Activated naive CD4-positive, alpha-beta T cell treated with anti-CD3 and anti-CD28 coated beads, Interleukin-2, amount 10 ng/mL, durations not matched to agents 7 days and 5 days (primary cell): ENCODE measurements at regions of chr15 and their contacts with region 1.

Region 1: DNA sequence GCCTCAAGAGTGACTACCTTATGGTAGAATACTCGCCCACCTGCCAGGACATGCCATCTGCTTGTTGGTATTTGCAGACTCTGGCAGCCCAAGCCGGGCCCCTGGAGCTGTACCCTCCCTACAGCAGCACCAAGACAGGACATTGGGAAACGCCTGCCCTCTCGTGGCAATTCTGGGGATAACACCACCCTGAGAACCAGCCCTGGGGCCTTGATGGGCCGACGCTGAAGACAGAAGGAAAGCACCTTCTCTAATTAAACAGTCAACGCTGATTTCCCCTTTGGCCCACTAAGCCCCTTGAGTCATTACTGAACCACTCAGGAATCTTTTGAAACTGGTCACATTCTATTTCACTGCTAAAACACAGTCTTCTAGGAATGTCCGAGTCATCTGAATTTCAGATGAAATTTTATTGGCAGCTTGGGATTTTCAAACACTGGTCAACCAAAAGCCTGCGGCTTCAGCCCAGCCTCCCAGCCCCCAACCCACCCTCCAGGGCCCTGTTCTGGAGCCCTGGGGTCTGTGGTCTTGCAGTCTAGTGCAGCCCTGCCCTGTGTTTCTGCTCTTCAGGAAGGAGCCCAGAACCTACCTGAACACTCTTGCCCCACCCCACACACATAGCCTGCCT is 91.3 kb downstream of the TMEM266 start:
- DNase-seq: peak; percentile 83
- H3K4me3 Mint-ChIP-seq: no peak overlapping the region
- H3K27ac Mint-ChIP-seq: no peak overlapping the region
- H3K4me1 Mint-ChIP-seq: peaks cover 9% of the 10 kb centered on the region
- H3K27me3 Mint-ChIP-seq: peaks cover 48% of the 10 kb centered on the region

Region 2: GRCh38 chr15:76057332-76058000 is 93.6 kb before region 1 on chr15:
- CTCF ChIA-PET with region 1: interaction called, 65 read pairs
- DNase-seq: peak; percentile 57
- H3K4me3 Mint-ChIP-seq: no peak overlapping the region
- H3K27ac Mint-ChIP-seq: no peak overlapping the region
- H3K4me1 Mint-ChIP-seq: peaks cover 15% of the 10 kb centered on the region
- H3K27me3 Mint-ChIP-seq: peaks cover 61% of the 10 kb centered on the region

Region 3: GRCh38 chr15:76169013-76169412 is 17.9 kb after region 1 on chr15:
- CTCF ChIA-PET with region 1: interaction called, 12 read pairs
- DNase-seq: no peak
- H3K4me3 Mint-ChIP-seq: no peak overlapping the region
- H3K27ac Mint-ChIP-seq: no peak overlapping the region
- H3K4me1 Mint-ChIP-seq: no peaks in the 10 kb centered on the region
- H3K27me3 Mint-ChIP-seq: peaks cover 47% of the 10 kb centered on the region